Right ventricle myocardium superior (tissue), 1 donor: ENCODE measurements at regions of chr9 and their contacts with region 1.

Region 1: DNA sequence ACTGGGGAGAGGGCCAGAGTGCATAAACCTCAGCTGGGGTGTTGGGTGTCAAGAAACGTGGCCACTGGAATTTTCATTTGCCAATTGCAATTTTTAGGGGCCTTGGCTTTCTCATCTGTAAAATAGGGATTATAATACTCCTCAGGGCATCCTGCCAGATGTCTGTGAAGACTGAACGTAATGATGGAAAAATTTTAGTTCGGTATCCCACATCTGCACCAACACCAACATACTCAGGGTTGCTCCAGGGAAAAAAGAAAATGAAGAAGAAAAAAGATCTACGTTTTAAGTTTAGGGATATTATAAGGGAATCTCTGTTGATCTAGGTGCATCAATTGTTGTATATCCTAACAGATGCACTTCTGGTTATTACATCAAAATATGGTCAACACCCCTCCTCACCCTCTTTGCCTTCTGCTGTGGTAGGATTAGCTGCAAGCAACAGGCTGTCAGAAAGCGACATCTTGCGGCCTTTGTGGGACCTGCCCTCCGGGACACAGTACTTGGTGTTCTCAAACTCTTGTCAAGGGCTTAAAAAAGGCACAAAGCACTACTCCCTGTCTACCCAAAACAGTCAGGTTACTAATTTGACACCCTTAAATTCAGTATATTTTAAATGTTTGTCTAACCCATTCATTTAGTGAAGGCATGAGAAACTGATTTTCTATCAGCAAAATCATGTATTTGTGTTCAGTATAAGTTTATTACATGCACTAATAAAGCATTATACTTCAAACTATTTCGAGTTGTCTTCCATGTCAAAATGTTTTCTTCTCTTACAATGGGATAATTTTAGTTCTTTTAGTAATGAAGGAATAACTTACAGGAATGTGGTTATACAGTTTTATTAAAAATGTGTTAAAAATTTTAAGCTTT is 8.3 kb upstream of the TBC1D2 start:
- DNase-seq: peak; percentile 84
- ATAC-seq: peak; percentile 98

Region 2: DNA sequence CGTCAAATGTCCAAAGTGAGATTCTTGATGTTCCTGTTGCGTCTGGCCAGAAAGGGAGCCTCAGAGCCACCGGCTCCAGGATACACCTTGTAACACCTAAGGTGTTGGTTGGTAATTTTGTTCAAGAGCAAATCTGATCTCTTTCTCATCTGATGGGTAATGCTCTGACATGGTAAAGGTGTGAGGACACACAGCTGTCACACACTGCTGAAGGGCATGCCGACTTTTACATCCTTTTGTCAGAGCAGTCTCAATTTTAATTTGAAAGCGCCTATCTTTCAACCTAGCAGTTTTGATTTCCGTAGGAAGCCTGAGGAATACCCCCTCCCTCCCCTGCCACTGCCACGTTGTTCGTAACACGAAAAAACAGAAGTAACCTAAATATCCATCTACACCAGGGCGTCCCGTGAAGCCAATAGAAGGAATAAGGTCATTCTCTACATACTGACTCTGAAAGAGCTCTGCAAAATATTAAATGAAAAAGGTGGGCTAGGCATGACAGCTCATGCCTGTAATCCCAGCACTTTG is 688.0 kb before region 1 on chr9:
- intact Hi-C with region 1: no loop called
- DNase-seq: no peak
- ATAC-seq: no peak

Region 3: GRCh38 chr9:97710356-97711222 is 553.1 kb before region 1 on chr9:
- intact Hi-C with region 1: loop called (anchors 5 kb)
- DNase-seq: no peak
- ATAC-seq: peak; percentile 92

Region 4: GRCh38 chr9:97921959-97922724 is 341.6 kb before region 1 on chr9 and contains the start of gene TRMO:
- intact Hi-C with region 1: loop called (anchors 2 kb)
- DNase-seq: peak; percentile 99
- ATAC-seq: peak; percentile 98
- total RNA-seq, gene TRMO: 5.8 TPM

Region 5: DNA sequence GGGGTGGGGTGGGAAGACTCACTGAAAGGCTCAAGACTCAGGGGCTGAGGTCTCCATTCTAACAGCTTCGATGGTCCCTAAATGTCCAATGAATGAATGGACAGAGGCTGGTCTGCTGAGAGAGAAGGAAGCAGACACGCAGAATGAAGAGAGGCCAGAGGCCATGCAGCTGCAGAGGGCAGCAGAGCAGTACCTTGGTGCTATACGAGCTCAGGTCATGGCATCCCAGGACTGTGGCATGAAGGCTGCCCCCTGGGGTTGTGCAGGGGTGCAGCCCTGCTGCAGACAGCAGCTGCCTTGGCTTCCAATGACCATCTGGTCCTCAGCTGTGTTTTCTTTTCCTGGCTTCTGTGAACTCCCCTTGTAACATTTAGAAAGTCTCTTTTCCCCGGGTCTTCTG is 56.1 kb before region 1 on chr9:
- intact Hi-C with region 1: loop called (anchors 5 kb)
- DNase-seq: no peak
- ATAC-seq: no peak